A549 (cell line): ENCODE measurements at regions of chr15 and their contacts with region 1.

Region 1: GRCh38 chr15:100671858-100672543 is 69.6 kb downstream of the ASB7 start:
- DNase-seq: peak; percentile 69 to 84
- ATAC-seq: peak; percentile 97 to 99
- H3K4me3 ChIP-seq: peak overlapping the region; percentile 33
- H3K27ac ChIP-seq: peak overlapping the region; percentile 68 to 73
- H3K4me1 ChIP-seq: peaks cover 5% of the 10 kb centered on the region
- CTCF ChIP-seq: peak; percentile 95
- EP300 ChIP-seq: no peak
- POLR2A ChIP-seq: no peak
- RAD21 ChIP-seq: peak; percentile 99

Region 2: DNA sequence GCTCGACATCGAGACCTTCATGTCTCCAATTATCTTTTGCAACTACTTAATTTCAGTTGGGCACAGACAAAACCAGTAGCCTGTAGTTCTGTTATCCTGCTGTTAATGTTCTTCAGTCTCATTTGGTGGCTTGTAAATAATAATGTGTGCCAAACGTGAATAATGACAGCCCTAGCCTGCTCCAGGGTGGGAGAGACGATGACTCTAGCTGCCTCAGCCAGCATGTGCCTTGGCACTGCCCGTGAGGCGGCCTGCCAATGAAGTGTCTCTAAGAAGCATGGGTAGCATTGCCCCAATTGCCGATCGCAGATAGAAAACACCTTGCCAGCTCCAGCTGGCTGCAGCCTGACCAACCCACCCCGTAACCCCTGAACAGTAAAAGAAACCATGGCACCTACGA is 10.8 kb before region 1 on chr15:
- CTCF ChIA-PET with region 1: interaction called, 37 read pairs
- POLR2A ChIA-PET with region 1: no interaction called
- DNase-seq: no peak
- ATAC-seq: no peak
- H3K4me3 ChIP-seq: no peak overlapping the region
- H3K27ac ChIP-seq: no peak overlapping the region
- H3K4me1 ChIP-seq: no peaks in the 10 kb centered on the region
- CTCF ChIP-seq: no peak
- EP300 ChIP-seq: no peak
- POLR2A ChIP-seq: no peak
- RAD21 ChIP-seq: no peak

Region 3: GRCh38 chr15:100721770-100722550 is 50.0 kb after region 1 on chr15:
- CTCF ChIA-PET with region 1: interaction called, 32 read pairs
- POLR2A ChIA-PET with region 1: interaction called, 5 read pairs
- DNase-seq: peak; percentile 98
- ATAC-seq: peak; percentile 80 to 90
- H3K4me3 ChIP-seq: peak overlapping the region; percentile 19; the same call in 2 of the 3 replicates
- H3K27ac ChIP-seq: peak overlapping the region; percentile 80 to 81
- H3K4me1 ChIP-seq: peaks cover 43% of the 10 kb centered on the region
- CTCF ChIP-seq: no peak
- EP300 ChIP-seq: peak; percentile 63 to 80; a peak in 2 of 5 replicates
- POLR2A ChIP-seq: no peak
- RAD21 ChIP-seq: peak in 1 of 2 experiments; percentile 35; a peak in 2 of 5 replicates

Region 4: DNA sequence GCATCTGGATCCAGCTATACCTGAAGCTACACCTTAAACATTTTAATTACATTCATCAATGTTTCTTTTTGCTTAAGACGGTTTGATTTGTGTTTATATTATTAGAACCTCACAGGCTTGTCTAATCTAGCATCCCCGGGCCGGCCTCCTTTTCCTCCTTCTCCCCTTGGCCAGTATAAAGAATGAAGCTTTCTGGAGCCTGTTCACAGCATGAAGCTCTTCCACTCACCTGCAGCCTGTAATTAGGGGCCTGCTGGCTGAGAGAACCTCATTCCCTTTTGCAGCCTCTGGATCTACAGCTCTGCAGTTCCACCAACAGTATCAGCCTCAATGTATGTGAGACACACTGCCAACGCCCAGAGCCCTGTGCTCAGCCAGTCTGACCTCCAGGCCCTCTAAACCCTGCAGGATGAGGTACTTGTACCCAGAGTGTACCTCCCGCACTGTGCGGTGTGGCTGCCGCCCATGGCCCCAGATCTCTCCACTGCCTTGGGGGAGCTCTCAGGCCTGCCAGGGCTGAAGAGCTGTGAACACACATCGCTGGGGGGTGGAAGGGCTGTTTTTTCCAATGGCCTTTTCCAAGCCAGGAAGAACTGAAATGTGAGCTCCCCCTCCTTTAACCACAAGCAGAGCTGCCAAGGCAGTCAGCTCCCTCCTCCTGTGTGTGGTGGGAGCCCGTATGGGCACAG is 92.9 kb after region 1 on chr15:
- CTCF ChIA-PET with region 1: interaction called, 15 read pairs
- POLR2A ChIA-PET with region 1: no interaction called
- DNase-seq: no peak
- ATAC-seq: peak in 1 of 2 experiments; percentile 7; a peak in 1 of 6 replicates
- H3K4me3 ChIP-seq: no peak overlapping the region
- H3K27ac ChIP-seq: no peak overlapping the region
- H3K4me1 ChIP-seq: peaks cover 7% of the 10 kb centered on the region
- CTCF ChIP-seq: no peak
- EP300 ChIP-seq: no peak
- POLR2A ChIP-seq: no peak
- RAD21 ChIP-seq: no peak

Region 5: DNA sequence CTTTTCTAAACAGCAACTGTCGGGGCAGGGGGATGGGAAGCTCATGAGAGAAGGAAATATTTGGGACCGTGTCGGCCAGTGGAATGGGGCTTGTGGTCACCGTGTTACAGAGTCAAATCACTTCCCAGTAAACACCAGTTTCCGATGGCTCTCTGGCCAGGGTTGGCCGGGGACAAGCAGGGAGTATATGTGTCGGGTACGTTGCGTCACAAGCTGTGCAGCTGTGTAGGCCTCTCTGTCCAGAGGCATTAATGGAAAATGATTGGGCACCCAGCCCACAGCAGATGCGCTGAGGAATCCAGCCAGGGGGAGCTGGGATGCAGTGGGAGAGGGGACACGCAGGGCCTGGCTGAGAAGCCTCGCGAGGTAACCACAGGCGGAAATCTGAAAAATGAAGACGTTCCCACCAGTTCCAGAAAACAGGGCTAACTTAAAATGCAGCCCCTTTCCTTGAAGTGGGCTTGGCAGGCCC is 191.8 kb after region 1 on chr15:
- CTCF ChIA-PET with region 1: interaction called, 117 read pairs
- POLR2A ChIA-PET with region 1: no interaction called
- DNase-seq: no peak
- ATAC-seq: no peak
- H3K4me3 ChIP-seq: no peak overlapping the region
- H3K27ac ChIP-seq: no peak overlapping the region
- H3K4me1 ChIP-seq: peaks cover 7% of the 10 kb centered on the region; the same call in 2 of the 3 replicates
- CTCF ChIP-seq: no peak
- EP300 ChIP-seq: no peak
- POLR2A ChIP-seq: no peak
- RAD21 ChIP-seq: no peak

Region 6: GRCh38 chr15:100902436-100903167 is 230.6 kb after region 1 on chr15:
- CTCF ChIA-PET with region 1: interaction called, 14 read pairs
- POLR2A ChIA-PET with region 1: no interaction called
- DNase-seq: no peak
- ATAC-seq: no peak; a peak in 1 of 6 replicates
- H3K4me3 ChIP-seq: no peak overlapping the region
- H3K27ac ChIP-seq: no peak overlapping the region
- H3K4me1 ChIP-seq: no peaks in the 10 kb centered on the region
- CTCF ChIP-seq: no peak
- EP300 ChIP-seq: no peak
- POLR2A ChIP-seq: no peak
- RAD21 ChIP-seq: no peak